Cardiac septum (tissue), 1 donor: ENCODE measurements at regions of chr14 and their contacts with region 1.

Region 1: GRCh38 chr14:67446120-67447032 is 34.4 kb upstream of the PLEK2 start:
- DNase-seq: no peak

Region 2: GRCh38 chr14:67479974-67480373 is 33.6 kb after region 1 on chr14:
- intact Hi-C with region 1: loop called (anchors 5 kb)
- DNase-seq: no peak